Breast epithelium (tissue), 4 donors: ENCODE measurements at regions of chr4 and their contacts with region 1.

Region 1: DNA sequence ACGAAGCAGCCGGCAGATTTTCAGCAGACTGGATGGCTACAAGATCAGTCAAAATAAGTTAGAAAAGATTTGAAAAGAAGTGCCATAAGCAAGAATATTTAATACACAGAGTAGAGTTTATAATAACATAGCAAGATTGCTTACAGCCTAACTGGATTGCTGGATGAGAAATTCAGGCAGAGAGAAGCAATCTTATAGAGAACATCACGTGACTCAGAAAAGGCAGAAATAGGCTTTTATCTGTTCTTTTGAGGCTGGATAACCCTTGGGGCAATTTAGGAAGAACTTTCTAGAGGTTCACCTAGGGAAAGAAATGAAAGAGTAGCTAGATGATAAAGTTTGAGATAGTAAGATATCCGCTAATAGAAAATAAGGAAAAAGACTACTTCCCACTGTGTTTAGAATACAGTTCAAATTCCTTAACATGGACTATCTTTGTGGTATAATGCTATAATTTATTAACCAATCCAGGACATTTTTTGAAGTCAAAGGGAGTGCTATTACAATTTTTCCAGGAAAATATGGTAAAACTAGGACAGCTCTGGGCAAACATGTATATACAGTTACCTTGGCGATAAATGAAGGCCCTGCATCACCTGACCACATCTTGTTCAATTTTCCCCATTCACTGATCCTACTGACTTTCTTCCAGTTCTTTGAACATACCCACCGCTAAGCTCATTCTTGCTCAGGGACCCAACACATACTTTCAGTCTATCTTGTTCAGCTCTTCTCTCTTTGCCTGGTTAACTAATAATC is 12.8 kb upstream of the SPCS3 start:
- DNase-seq: no peak
- H3K4me3 ChIP-seq: no peak overlapping the region
- H3K27ac ChIP-seq: no peak overlapping the region
- H3K4me1 ChIP-seq: no peaks in the 10 kb centered on the region
- H3K27me3 ChIP-seq: no peaks in the 10 kb centered on the region
- CTCF ChIP-seq: no peak
- POLR2A ChIP-seq: no peak

Region 2: GRCh38 chr4:176292920-176293319 is 14.1 kb before region 1 on chr4:
- intact Hi-C with region 1: loop called (anchors 1 kb)
- DNase-seq: no peak
- H3K4me3 ChIP-seq: no peak overlapping the region
- H3K27ac ChIP-seq: no peak overlapping the region
- H3K4me1 ChIP-seq: no peaks in the 10 kb centered on the region
- H3K27me3 ChIP-seq: no peaks in the 10 kb centered on the region
- CTCF ChIP-seq: no peak
- POLR2A ChIP-seq: no peak